ENCODE measurements at regions of chr4 and their contacts with region 1.

Region 1: GRCh38 chr4:7939377-7940108 is at the start of gene AFAP1:
- DNase-seq: peak; percentile 33 to 93
- H3K4me3 ChIP-seq: peak within 1 kb of the TSS; percentile 77 to 99
- H3K27ac ChIP-seq: peak within 1 kb of the TSS; percentile 82 to 93
- H3K4me1 ChIP-seq: peaks cover 0 to 11% of the 10 kb centered on the region in 2 donors
- H3K27me3 ChIP-seq: no peaks in the 10 kb centered on the region
- CTCF ChIP-seq: no peak
- total RNA-seq, gene AFAP1: 84.9 TPM

Region 2: DNA sequence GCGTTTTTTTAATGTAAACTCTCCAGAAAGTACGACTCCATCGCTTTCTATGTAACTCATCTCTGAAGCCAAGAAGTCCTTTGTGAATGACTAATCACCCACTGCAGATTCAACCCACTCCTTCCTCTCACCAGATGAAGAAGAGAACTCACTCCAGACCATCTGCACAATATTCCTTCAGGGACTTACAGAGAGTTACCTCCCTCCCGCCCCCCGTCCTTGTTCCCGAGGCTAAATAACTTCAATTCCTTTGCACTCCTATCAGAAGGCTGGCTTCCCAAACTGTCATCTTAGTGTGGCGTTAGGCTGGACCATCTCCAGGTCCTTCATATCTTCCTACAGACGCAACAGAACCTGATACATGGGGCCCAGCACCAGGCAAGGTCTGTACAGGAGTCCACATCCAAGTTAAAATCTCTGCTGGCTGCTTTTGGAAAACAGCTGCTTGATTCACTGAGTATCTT is 82.3 kb before region 1 on chr4:
- intact Hi-C with region 1: loop called (anchors 5 kb)
- DNase-seq: no peak
- H3K4me3 ChIP-seq: peak overlapping the region in 1 of 2 donors; percentile 16
- H3K27ac ChIP-seq: peak overlapping the region in 1 of 2 donors; percentile 50
- H3K4me1 ChIP-seq: peaks cover 5 to 15% of the 10 kb centered on the region in 2 donors
- H3K27me3 ChIP-seq: no peaks in the 10 kb centered on the region
- CTCF ChIP-seq: no peak

Region 3: DNA sequence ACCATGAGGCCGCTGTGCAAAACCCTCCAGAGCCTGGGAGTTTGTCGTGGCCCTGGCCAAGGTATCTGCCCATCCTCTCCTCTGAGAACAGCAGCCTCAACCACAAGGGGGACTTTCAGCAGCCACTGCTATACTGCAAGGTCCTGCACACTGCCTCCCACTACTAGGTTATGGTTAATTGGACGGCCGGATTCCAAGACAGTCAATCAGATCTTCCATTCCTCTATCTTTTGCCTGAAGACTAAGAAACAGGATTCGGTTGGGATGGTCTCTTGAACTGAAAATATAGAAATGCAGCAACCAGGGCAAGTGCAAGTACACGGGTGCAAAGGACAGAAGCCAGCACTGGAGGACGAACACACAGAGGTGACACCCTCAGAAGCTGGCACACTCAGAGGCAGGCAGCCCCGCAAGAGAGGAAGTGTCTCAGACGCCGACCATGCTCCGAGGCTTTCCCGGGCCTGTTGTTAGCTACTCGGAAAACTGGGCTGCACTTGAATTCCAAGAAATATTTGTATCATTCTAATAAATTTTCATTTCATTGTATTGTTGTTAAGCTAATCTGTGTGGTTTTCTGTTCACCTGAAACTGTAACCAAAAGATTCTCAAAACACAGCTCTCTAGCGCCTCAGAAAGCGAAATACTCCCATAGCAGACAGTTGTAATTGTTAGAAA is 63.2 kb before region 1 on chr4:
- intact Hi-C with region 1: loop called (anchors 2 kb)
- DNase-seq: peak in 1 of 2 donors; percentile 68
- H3K4me3 ChIP-seq: peak overlapping the region in 1 of 2 donors; percentile 20
- H3K27ac ChIP-seq: peak overlapping the region; percentile 60 to 70
- H3K4me1 ChIP-seq: peaks cover 6 to 38% of the 10 kb centered on the region in 2 donors
- H3K27me3 ChIP-seq: no peaks in the 10 kb centered on the region
- CTCF ChIP-seq: peak in 1 of 3 experiments; percentile 5

Region 4: DNA sequence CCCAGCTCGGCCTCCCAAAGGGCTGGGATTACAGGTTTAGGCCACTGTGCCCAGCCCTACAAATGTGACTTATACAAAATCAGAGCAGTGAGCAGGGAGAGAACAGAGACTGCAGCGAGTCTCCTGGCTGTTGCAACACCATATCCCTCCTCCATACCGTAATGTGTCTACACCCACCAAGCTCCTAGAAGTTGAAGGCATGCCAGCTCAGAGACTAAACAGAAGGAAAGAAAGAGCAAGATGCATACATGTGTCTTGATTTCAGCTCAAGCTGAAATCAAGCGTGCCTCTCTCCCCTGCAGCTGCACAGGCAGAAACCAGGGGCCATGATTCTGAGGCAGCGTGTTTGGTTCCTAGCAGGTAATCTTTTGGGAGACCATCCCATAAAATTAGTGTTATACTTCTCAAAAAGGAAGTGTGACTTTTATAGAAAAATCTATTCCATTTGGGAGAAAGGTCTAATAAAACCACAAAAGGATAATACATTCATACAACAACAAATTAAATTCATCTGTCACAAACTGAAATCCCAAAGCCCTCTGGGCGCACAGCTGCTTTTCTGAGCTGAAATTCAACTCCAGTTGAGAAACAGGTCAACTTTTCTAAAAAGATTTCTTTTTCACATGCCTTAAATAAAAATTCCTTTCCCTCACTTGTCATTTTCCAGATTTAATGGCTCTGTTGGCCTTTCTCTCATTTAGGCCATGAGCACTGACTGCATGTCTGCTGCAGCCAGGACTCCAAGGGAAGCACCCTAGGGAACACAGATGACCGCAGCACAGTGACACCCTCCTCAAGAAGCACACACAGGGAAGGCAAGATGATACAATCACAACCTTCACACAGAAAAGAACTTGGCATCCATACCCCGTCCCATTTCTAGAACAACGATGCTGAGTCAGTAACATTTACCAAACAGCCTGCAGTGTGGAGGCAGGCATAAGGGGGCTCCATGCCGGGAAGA is 34.3 kb before region 1 on chr4:
- intact Hi-C with region 1: loop called (anchors 2 kb)
- DNase-seq: peak in 1 of 2 donors; percentile 77
- H3K4me3 ChIP-seq: peak overlapping the region; percentile 28 to 50
- H3K27ac ChIP-seq: peak overlapping the region; percentile 83 to 87
- H3K4me1 ChIP-seq: peaks cover 31 to 76% of the 10 kb centered on the region in 2 donors
- H3K27me3 ChIP-seq: no peaks in the 10 kb centered on the region
- CTCF ChIP-seq: no peak

Region 5: DNA sequence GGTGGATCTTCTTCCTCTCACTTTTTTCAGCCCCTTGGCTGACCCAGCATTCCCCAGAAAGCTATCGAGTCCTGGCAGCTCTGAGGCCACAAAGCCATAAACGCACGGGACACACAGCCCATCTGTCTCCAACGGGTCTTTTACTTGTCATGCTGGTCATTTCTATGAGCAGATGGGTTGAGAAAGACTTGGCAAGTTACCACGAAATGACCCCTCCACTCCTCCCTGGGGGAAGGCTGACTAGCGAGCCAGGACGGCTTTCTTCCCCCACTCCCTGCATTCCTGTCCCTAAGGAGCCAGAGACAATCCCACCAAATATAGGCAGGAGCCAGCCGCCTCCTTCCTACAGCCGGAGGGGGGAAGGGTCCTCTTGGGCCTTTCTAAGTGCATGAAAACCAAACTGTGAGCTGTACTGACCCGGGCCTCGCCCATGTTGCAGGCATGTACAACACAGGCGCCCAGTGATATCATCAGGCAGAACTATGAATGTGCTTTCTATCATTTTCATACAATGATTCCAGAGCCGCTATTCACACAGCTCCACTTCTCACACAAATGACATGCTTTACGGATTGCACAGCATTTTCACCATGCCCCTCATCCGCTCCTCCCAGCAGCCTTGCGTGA is 28.5 kb before region 1 on chr4:
- intact Hi-C with region 1: loop called (anchors 2 kb)
- DNase-seq: peak in 1 of 2 donors; percentile 74
- H3K4me3 ChIP-seq: peak overlapping the region in 1 of 2 donors; percentile 40
- H3K27ac ChIP-seq: peak overlapping the region; percentile 66 to 78
- H3K4me1 ChIP-seq: peaks cover 8 to 45% of the 10 kb centered on the region in 2 donors
- H3K27me3 ChIP-seq: no peaks in the 10 kb centered on the region
- CTCF ChIP-seq: no peak

Region 6: DNA sequence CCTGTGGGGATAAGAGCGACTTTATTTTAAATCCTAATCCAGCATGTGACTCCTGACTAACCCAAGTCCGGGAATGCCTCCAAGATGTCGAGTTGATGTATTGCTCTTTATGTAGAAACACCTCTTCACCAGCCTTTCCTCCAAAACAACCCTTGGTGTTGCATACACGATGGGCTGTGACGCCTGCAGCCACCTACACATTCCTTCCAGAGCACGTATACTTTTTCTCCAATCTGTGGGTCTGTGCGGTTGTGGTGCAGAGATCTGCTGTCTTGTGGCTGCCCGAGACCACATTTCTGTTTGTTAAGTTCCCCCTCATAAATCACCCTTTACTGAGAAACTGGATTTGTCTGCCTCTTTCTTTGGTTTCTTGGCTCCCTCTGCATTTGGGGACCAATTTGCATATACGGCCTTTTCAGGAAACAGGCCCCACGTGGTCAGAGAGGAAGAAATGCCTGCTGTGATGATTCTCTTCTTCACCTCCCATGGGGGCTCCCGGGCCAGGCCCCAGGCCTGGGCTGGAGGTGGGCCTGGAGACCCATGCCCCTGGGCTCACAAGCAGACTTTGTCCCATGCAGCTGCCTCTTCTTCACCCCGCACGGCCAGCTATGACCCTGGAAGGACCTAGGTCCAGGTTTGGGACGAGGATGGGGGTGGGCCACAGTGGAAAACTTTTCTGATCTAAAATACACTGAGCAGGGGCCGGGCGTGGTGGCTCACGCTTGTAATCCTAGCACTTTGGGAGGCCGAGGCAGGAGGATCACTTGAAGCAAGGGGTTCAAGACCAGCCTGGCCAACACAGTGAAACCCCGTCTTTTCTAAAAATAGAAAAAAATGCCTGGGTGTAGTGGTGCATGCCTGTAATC is 21.5 kb after region 1 on chr4:
- intact Hi-C with region 1: loop called (anchors 1 kb)
- DNase-seq: peak; percentile 33 to 84
- H3K4me3 ChIP-seq: no peak overlapping the region
- H3K27ac ChIP-seq: peak overlapping the region; percentile 62 to 81
- H3K4me1 ChIP-seq: peaks cover 0 to 20% of the 10 kb centered on the region in 2 donors
- H3K27me3 ChIP-seq: no peaks in the 10 kb centered on the region
- CTCF ChIP-seq: no peak

Region 7: GRCh38 chr4:7967501-7968261 is 28.1 kb after region 1 on chr4:
- intact Hi-C with region 1: loop called (anchors 2 kb)
- DNase-seq: no peak
- H3K4me3 ChIP-seq: no peak overlapping the region
- H3K27ac ChIP-seq: peak overlapping the region; percentile 56 to 74
- H3K4me1 ChIP-seq: peaks cover 4 to 22% of the 10 kb centered on the region in 2 donors
- H3K27me3 ChIP-seq: no peaks in the 10 kb centered on the region
- CTCF ChIP-seq: no peak

Measured in ascending aorta (tissue), 2 donors.